ENCODE measurements at regions of chr3 and their contacts with region 1.

Region 1: DNA sequence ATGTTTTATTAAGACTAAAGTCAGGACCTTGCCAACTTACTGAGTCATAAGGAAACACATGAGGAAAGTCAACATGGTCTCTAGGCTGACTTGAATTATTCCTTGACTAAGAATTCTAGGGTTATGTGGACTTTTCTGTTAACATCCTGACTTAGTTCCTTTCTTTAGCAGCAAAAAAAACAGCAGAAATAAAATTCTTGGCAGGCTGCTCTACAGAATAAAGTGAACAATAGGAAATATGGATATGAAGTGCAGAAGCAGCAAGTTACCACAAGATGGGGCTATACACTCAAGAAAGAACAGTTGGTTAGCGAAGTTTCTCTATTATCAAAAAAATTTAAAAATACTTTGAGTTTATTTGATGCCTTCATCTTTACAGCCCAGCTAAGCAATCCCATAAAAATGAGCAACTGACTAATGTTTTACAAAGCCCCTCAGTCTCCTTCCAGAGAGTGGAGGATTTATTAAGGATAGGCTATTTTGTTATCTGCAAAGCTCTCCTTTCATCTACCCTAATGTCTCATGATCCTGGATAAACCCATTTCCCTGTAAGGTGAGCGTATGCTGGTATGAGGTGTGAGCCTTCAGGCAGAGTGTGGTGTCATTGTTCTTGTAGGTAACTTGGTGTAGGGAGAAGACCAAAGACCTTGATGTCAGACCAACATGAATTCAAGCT is 23.1 kb upstream of the MCCC1 start:
- DNase-seq: peak in 4 of 5 donors; percentile 53 to 55 (median 54)
- H3K4me3 ChIP-seq: no peak overlapping the region
- H3K4me3 Mint-ChIP-seq: no peak overlapping the region
- H3K27ac ChIP-seq: no peak overlapping the region
- H3K27ac Mint-ChIP-seq: no peak overlapping the region
- H3K4me1 ChIP-seq: no peaks in the 10 kb centered on the region
- H3K4me1 Mint-ChIP-seq: no peaks in the 10 kb centered on the region
- H3K27me3 ChIP-seq: no peaks in the 10 kb centered on the region
- H3K27me3 Mint-ChIP-seq: peaks cover 0 to 2% of the 10 kb centered on the region in 2 donors

Region 2: DNA sequence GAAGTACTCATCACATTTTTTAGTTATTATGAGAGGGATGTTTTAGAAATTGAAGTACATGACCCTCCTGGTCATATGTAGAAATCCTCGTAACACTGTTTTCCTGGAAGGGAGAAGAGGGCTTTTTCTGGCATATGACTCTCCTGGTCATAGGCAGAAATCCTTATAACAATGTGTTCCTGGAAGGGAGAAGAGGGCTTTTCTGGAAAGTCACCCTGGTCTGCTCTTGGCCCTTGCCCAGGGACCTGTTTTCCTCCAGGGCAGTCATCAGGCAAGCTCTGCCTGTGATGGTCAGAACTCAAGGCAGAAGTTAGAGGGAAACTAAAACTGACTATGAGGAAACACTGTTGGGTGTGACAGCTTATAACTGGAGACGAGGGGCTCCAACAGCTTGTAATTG is 12.4 kb after region 1 on chr3:
- CTCF ChIA-PET with region 1: interaction called, 10 read pairs
- POLR2A ChIA-PET with region 1: no interaction called
- intact Hi-C with region 1: no loop called
- DNase-seq: no peak
- H3K4me3 ChIP-seq: no peak overlapping the region
- H3K4me3 Mint-ChIP-seq: no peak overlapping the region
- H3K27ac ChIP-seq: no peak overlapping the region
- H3K27ac Mint-ChIP-seq: no peak overlapping the region
- H3K4me1 ChIP-seq: no peaks in the 10 kb centered on the region
- H3K4me1 Mint-ChIP-seq: no peaks in the 10 kb centered on the region
- H3K27me3 ChIP-seq: no peaks in the 10 kb centered on the region
- H3K27me3 Mint-ChIP-seq: no peaks in the 10 kb centered on the region

Region 3: DNA sequence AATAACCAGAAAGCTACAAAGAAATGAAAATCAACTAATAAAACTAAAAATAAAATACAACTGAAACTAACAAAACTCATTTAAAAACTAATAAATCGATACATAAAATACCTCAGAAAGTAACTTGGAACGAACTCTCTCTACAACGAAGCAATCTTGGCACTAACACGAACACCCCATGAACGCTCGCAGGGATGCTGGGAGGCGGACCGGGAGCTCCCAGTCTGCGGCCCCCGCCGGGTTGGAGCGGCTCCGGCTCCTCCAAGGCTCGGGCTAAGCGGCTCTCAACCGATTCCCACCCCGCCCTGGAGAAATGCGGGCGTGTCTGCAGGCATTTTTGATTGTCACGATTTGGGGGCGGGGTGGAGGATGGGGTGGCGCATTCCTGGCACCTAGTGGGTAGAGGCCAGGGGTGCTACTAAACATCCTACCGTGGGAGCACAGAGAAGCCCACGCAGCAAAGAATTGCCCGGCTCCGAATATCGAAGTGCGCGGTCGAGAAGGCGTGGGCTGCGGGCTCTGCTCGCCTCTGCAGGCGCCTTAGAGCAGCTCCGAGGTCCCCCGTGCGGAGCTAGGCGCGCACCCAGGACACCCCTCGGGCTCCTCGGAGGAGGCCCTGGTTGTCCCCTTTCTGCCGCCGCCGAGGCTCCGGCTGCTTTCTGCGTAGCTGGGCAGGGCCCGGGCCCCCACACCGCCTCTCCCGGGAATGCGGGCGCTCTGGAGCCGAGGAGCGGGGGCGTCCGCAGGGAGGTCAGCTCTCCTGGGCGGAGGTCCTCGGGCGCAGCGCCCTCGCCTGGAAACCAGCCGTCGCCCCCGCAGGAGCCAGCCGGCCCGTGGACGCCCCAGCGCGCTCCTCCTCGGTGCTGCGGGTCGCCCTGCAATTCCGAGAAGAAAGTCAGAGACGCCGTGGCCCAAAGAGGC is 56.5 kb after region 1 on chr3:
- CTCF ChIA-PET with region 1: interaction called, 12 read pairs
- POLR2A ChIA-PET with region 1: no interaction called
- intact Hi-C with region 1: no loop called
- DNase-seq: peak; percentile 16 to 49 (median 23)
- H3K4me3 ChIP-seq: peak overlapping the region in 1 of 2 donors; percentile 45
- H3K4me3 Mint-ChIP-seq: peak overlapping the region; percentile 65 to 85 (median 80)
- H3K27ac ChIP-seq: no peak overlapping the region
- H3K27ac Mint-ChIP-seq: peak overlapping the region in 1 of 7 donors; percentile 29
- H3K4me1 ChIP-seq: peaks cover 15% of the 10 kb centered on the region
- H3K4me1 Mint-ChIP-seq: peaks cover 0 to 5% (median 5%) of the 10 kb centered on the region in 4 donors
- H3K27me3 ChIP-seq: peaks cover 10% of the 10 kb centered on the region
- H3K27me3 Mint-ChIP-seq: peaks cover 10 to 22% of the 10 kb centered on the region in 2 donors

Region 4: DNA sequence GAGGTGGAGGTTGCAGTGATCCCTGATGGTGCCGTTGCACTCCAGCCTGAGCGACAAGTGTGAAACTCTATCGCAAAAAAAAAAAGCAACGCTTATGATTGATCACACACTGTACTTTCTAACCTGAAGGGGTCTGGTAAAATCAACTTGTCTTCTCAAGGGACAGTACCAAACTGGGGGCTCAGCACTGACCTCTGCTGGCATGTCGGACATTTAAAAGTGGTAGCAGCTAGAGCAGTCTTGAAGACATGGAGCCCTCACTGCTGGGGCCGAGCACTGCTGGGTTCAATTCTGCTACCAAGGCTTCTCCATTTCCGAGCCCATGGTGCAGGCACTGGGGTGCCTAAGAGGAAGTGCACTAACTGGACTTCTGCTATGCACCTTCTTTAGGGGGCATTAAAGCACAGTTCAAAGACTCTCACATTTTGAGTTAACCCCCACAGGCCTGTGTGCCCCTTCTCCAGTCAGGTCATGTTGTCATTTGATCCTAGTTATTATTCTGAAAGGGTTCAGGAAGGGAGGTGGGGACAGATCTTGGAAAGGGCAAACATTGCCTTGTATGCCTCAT is 66.6 kb after region 1 on chr3:
- CTCF ChIA-PET with region 1: interaction called, 13 read pairs
- POLR2A ChIA-PET with region 1: no interaction called
- intact Hi-C with region 1: loop called (anchors 2 kb)
- DNase-seq: no peak
- H3K4me3 ChIP-seq: no peak overlapping the region
- H3K4me3 Mint-ChIP-seq: no peak overlapping the region
- H3K27ac ChIP-seq: no peak overlapping the region
- H3K27ac Mint-ChIP-seq: peak overlapping the region in 1 of 7 donors; percentile 42
- H3K4me1 ChIP-seq: no peaks in the 10 kb centered on the region
- H3K4me1 Mint-ChIP-seq: no peaks in the 10 kb centered on the region
- H3K27me3 ChIP-seq: no peaks in the 10 kb centered on the region
- H3K27me3 Mint-ChIP-seq: no peaks in the 10 kb centered on the region